Panc1 (cell line): ENCODE measurements at regions of chr12 and their contacts with region 1.

Region 1: DNA sequence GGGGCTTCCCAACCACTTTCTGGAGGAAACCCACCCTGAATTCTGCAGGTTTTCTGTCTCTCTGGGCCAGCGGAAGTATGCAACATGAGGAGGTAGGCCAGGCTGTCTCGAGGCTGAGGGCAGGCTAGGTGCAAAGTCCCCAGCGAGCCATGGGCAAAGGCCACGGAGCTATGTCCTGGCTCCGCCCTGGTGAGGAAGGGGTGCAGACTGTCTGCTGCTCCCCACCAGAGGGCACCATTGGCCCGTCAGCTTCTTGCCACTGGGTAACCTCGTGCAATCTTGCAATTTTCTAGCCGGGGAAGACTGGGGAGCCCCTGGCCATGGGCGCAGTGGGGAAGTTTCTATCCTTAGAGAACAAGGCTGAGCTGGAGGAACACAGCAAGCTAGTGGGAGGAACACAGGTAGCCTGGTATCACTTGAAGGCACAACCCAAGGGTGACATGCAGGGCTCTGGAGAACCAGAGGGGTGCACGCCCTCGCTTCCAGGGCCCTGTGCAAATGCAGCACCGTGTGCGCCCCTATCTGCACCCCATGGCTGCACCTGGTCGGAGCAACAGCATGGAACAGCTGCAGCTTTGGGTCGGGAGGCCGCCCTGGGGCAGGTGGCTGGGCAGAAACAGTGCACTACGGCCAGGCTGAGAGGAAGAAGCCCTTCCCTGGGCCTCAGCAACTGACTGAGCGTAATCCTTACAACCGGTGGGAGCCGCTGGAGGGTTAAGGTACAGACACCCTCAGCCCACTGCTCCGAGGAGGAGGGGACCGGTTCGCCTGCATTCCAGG is 27.6 kb upstream of the RPLP0 start:
- DNase-seq: no peak
- ATAC-seq: peak; percentile 35
- H3K4me3 ChIP-seq: peak overlapping the region in 1 of 2 experiments; percentile 3; a peak in 1 of 4 replicates
- H3K27ac ChIP-seq: peak overlapping the region; percentile 100
- H3K4me1 ChIP-seq: peaks cover 98% of the 10 kb centered on the region
- H3K27me3 ChIP-seq: no peaks in the 10 kb centered on the region
- CTCF ChIP-seq: peak; percentile 92

Region 2: GRCh38 chr12:118526255-118527095 is 1702.0 kb before region 1 on chr12:
- CTCF ChIA-PET with region 1: no interaction called
- POLR2A ChIA-PET with region 1: no interaction called
- in situ Hi-C with region 1: no loop called
- intact Hi-C with region 1: no loop called
- DNase-seq: no peak
- ATAC-seq: no peak
- H3K4me3 ChIP-seq: no peak overlapping the region
- H3K27ac ChIP-seq: no peak overlapping the region
- H3K4me1 ChIP-seq: no peaks in the 10 kb centered on the region
- H3K27me3 ChIP-seq: peaks cover 5% of the 10 kb centered on the region; the same call in 1 of the 2 replicates
- CTCF ChIP-seq: no peak

Region 3: GRCh38 chr12:120209851-120210250 is 18.6 kb before region 1 on chr12:
- CTCF ChIA-PET with region 1: no interaction called
- POLR2A ChIA-PET with region 1: interaction called, 11 read pairs
- in situ Hi-C with region 1: no loop called
- intact Hi-C with region 1: no loop called
- DNase-seq: no peak
- ATAC-seq: peak; percentile 8; the same call in 1 of the 2 replicates
- H3K4me3 ChIP-seq: no peak overlapping the region
- H3K27ac ChIP-seq: peak overlapping the region; percentile 11; the same call in 1 of the 2 replicates
- H3K4me1 ChIP-seq: peaks cover 9% of the 10 kb centered on the region; the same call in 1 of the 2 replicates
- H3K27me3 ChIP-seq: no peaks in the 10 kb centered on the region
- CTCF ChIP-seq: no peak

Region 4: GRCh38 chr12:120249875-120250795 is 21.7 kb after region 1 on chr12:
- CTCF ChIA-PET with region 1: interaction called, 12 read pairs
- POLR2A ChIA-PET with region 1: interaction called, 6 read pairs
- in situ Hi-C with region 1: no loop called
- intact Hi-C with region 1: no loop called
- DNase-seq: no peak
- ATAC-seq: 0 out of 2 replicates have a peak, but pooled peaks have one; percentile 1
- H3K4me3 ChIP-seq: peak overlapping the region in 1 of 2 experiments; percentile 8; a peak in 1 of 4 replicates
- H3K27ac ChIP-seq: peak overlapping the region; percentile 100
- H3K4me1 ChIP-seq: peaks cover 97% of the 10 kb centered on the region
- H3K27me3 ChIP-seq: no peaks in the 10 kb centered on the region
- CTCF ChIP-seq: no peak

Region 5: GRCh38 chr12:120257041-120257821 is 28.8 kb after region 1 on chr12:
- CTCF ChIA-PET with region 1: interaction called, 22 read pairs
- POLR2A ChIA-PET with region 1: interaction called, 5 read pairs
- in situ Hi-C with region 1: no loop called
- intact Hi-C with region 1: no loop called
- DNase-seq: no peak
- ATAC-seq: peak; percentile 48
- H3K4me3 ChIP-seq: peak overlapping the region in 1 of 2 experiments; percentile 3; a peak in 2 of 4 replicates
- H3K27ac ChIP-seq: peak overlapping the region; percentile 100
- H3K4me1 ChIP-seq: peaks cover 96% of the 10 kb centered on the region
- H3K27me3 ChIP-seq: no peaks in the 10 kb centered on the region
- CTCF ChIP-seq: no peak

Region 6: GRCh38 chr12:120265473-120266179 is 37.1 kb after region 1 on chr12 and contains the start of gene PXN:
- CTCF ChIA-PET with region 1: interaction called, 26 read pairs
- POLR2A ChIA-PET with region 1: interaction called, 10 read pairs
- in situ Hi-C with region 1: no loop called
- intact Hi-C with region 1: loop called (anchors 2 kb)
- DNase-seq: no peak
- ATAC-seq: peak; percentile 84
- H3K4me3 ChIP-seq: peak within 1 kb of the TSS; percentile 87 to 92
- H3K27ac ChIP-seq: peak within 1 kb of the TSS; percentile 100
- H3K4me1 ChIP-seq: peaks cover 34% of the 10 kb centered on the region
- H3K27me3 ChIP-seq: no peaks in the 10 kb centered on the region
- CTCF ChIP-seq: peak; percentile 93
- total RNA-seq, gene PXN: 484 TPM

Region 7: GRCh38 chr12:120301962-120302815 is 73.7 kb after region 1 on chr12 and contains the start of gene SIRT4:
- CTCF ChIA-PET with region 1: interaction called, 3 read pairs
- POLR2A ChIA-PET with region 1: interaction called, 15 read pairs
- in situ Hi-C with region 1: no loop called
- intact Hi-C with region 1: no loop called
- DNase-seq: peak; percentile 89
- ATAC-seq: peak; percentile 99
- H3K4me3 ChIP-seq: peak within 1 kb of the TSS; percentile 65 to 94
- H3K27ac ChIP-seq: peak within 1 kb of the TSS; percentile 89
- H3K4me1 ChIP-seq: no peaks in the 10 kb centered on the region
- H3K27me3 ChIP-seq: no peaks in the 10 kb centered on the region
- CTCF ChIP-seq: peak; percentile 98
- total RNA-seq, gene SIRT4: 1.5 TPM

Region 8: DNA sequence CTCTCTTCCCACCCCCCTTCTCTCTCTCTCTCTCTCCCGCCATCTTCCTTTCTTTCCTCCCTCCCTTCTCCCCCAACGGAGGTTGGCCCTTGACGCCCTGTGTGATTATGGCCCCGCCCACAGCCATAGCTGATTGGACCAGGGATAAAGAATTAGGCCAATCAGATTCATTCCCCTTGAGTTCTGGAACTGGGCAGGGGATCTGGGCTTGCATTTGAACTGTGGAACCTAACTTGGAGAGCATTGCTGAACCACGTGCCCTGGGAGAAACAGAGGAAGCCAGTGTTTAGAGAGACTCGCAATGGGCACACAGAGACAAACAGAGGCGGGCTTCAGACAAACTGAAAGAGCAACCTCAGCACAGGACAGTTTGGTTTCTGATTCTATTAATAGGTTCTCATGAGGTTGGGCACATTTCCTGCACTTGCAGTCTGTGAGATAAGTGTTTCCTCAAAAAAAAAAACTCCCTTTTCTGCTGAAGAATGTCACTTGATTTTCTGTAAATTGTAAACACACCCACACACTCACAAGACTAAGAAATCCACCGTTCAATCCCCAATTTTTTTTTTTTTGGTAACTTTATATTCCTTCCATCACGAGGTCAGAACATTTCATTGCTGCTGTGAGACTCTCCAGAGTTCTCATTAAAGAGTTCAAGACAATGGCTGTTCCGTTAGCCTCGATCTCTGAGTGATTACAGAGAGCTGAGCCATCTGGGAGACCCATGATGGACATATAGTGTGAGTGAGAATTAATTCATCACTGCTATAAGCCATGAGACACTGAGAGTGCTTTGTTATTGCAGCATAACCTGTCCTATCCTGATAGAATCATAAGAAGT is 900.7 kb after region 1 on chr12:
- CTCF ChIA-PET with region 1: no interaction called
- POLR2A ChIA-PET with region 1: no interaction called
- in situ Hi-C with region 1: no loop called
- intact Hi-C with region 1: no loop called
- DNase-seq: no peak
- ATAC-seq: no peak
- H3K4me3 ChIP-seq: no peak overlapping the region
- H3K27ac ChIP-seq: no peak overlapping the region
- H3K4me1 ChIP-seq: no peaks in the 10 kb centered on the region
- H3K27me3 ChIP-seq: no peaks in the 10 kb centered on the region
- CTCF ChIP-seq: no peak